Mammary epithelial cell (primary cell): ENCODE measurements at regions of chr10 and their contacts with region 1.

Region 1: DNA sequence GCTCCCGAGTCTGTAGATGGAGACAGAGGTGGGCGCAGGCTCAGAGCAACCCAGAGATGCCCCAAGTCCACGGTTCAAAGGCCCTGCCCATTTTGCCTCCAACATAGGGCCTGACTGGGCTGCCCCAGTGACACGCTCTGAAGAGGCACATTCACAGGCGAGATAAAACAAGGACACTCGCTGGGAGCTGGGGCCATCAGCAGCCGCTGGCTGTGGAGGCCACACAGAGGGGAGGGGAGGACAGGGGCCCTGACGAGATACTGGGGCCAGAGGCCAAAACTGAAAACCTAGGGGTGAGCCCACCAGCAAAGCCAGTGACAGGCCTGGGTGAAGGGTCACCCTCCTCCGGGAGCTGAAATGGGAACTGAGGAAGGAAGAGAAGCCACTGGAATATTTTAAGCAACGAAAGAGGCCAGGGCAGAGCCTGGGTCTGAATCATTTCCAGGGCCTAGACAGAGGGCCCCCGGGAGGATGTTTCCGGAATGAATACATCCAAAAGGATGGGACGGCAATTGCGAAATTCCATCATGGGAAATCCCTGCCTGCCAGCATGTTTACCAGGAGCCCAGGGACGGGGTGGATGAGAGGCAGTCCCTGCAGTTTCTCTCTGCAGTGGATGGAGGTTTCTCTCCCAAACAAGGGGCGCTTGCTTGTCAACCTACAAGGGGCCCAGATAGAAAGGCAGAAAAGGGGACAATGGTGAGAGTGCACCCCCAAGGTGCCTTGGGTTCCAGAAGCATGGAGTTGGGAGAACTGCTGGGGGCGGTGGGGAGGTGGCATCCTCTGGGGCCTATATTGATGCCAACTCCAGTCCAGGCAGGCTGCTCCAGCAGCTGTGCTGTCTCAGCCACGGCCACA is 29.0 kb upstream of the HSPA12A start:
- DNase-seq: peak; percentile 91
- H3K4me3 ChIP-seq: no peak overlapping the region
- H3K27ac ChIP-seq: no peak overlapping the region
- H3K4me1 ChIP-seq: peaks cover 29% of the 10 kb centered on the region
- H3K27me3 ChIP-seq: no peaks in the 10 kb centered on the region
- CTCF ChIP-seq: no peak

Region 2: GRCh38 chr10:116331815-116332214 is 439.5 kb before region 1 on chr10:
- CTCF ChIA-PET with region 1: no interaction called
- dilution Hi-C with region 1: no loop called
- in situ Hi-C with region 1: no loop called
- intact Hi-C with region 1: no loop called
- DNase-seq: no peak
- H3K4me3 ChIP-seq: no peak overlapping the region
- H3K27ac ChIP-seq: no peak overlapping the region
- H3K4me1 ChIP-seq: no peaks in the 10 kb centered on the region
- H3K27me3 ChIP-seq: peaks cover 2% of the 10 kb centered on the region
- CTCF ChIP-seq: no peak

Region 3: GRCh38 chr10:116608686-116609594 is 162.4 kb before region 1 on chr10:
- CTCF ChIA-PET with region 1: no interaction called
- dilution Hi-C with region 1: loop called (anchors 10 kb)
- in situ Hi-C with region 1: no loop called
- intact Hi-C with region 1: no loop called
- DNase-seq: no peak
- H3K4me3 ChIP-seq: no peak overlapping the region
- H3K27ac ChIP-seq: no peak overlapping the region
- H3K4me1 ChIP-seq: no peaks in the 10 kb centered on the region
- H3K27me3 ChIP-seq: no peaks in the 10 kb centered on the region
- CTCF ChIP-seq: no peak

Region 4: GRCh38 chr10:116742367-116743265 is 28.7 kb before region 1 on chr10 and contains the start of gene HSPA12A:
- CTCF ChIA-PET with region 1: no interaction called
- dilution Hi-C with region 1: no loop called
- in situ Hi-C with region 1: no loop called
- intact Hi-C with region 1: loop called (anchors 1 kb)
- DNase-seq: peak; percentile 76
- H3K4me3 ChIP-seq: peak within 1 kb of the TSS; percentile 57 to 74 (median 57)
- H3K27ac ChIP-seq: peak within 1 kb of the TSS; percentile 51
- H3K4me1 ChIP-seq: peaks cover 15% of the 10 kb centered on the region
- H3K27me3 ChIP-seq: no peaks in the 10 kb centered on the region
- CTCF ChIP-seq: no peak
- total RNA-seq, gene HSPA12A: 10.8 to 10.9 TPM